Right ventricle myocardium inferior (tissue), 1 donor: ENCODE measurements at regions of chr19 and their contacts with region 1.

Region 1: GRCh38 chr19:16897154-16897855 is 8.5 kb downstream of the F2RL3 start:
- DNase-seq: peak; percentile 96
- ATAC-seq: peak; percentile 91

Region 2: GRCh38 chr19:16561382-16561781 is 335.9 kb before region 1 on chr19:
- intact Hi-C with region 1: no loop called
- DNase-seq: no peak
- ATAC-seq: no peak

Region 3: DNA sequence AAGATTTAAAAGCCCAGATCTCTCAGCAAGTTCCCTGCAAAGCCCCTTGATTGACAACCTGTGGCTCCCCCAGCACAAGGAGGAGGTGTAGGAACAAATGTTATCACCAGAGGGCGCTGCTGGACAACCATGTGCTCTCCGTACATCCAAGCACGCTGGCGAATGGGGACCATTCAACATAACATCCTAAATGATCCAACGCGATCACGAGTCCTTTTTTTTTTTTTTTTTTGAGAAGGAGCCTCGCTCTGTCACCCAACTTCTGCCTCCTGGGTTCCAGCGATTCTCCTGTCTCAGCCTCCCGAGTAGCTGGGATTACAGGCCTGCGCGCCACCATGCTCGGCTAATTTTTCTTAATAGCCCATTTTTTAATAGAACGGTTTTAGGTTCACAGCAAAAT is 125.7 kb before region 1 on chr19:
- intact Hi-C with region 1: loop called (anchors 2 kb)
- DNase-seq: peak; percentile 84
- ATAC-seq: peak; percentile 73

Region 4: GRCh38 chr19:16829010-16829821 is 68.1 kb before region 1 on chr19 and contains the start of gene SIN3B:
- intact Hi-C with region 1: loop called (anchors 5 kb)
- DNase-seq: peak; percentile 89
- ATAC-seq: peak; percentile 80
- total RNA-seq, gene SIN3B: 27.8 TPM

Region 5: GRCh38 chr19:16942583-16942982 is 45.3 kb after region 1 on chr19:
- intact Hi-C with region 1: no loop called
- DNase-seq: no peak
- ATAC-seq: no peak

Region 6: DNA sequence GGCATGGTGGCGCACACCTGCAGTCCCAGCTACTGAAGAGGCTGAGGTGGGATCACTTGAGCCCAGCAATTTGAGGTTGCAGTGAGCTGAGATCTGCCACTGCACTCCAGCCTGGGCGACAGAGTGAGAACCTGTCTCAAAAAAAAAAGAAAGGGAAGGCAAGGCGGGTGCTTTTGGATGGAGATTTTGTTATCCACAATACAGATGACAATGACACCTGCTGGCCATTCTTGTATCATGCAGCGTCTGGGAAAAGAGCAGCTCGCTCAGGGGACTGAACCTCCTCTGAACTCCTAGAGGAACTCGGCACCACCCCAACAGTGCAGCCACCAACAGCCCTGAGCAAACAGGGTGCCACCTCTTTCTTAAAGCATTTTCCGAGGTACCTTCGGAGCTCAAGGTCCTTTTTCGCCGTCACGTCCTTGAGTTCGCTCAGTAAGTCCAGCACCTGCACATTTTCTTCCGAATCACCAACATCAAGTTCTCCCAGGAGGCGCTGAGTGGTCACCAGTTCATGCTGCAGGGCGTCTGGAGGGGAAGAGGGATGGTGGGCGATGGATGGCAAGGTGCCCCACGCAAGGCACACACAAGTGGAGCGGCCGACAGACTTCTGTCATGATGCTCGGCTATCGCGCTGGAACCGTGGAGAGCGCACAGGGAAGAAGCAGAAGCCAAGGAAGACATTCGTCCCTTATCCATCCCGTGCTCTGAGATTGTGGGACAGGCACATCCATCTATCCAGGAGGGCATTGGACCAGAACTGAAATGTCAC is 155.3 kb after region 1 on chr19:
- intact Hi-C with region 1: loop called (anchors 10 kb)
- DNase-seq: no peak
- ATAC-seq: no peak